Activated naive CD4-positive, alpha-beta T cell treated with anti-CD3 and anti-CD28 coated beads for 36 hours (primary cell): ENCODE measurements at regions of chr22 and their contacts with region 1.

Region 1: GRCh38 chr22:38755911-38756532 is at the start of gene SUN2:
- DNase-seq: peak; percentile 94
- H3K4me3 Mint-ChIP-seq: peak within 1 kb of the TSS; percentile 92
- H3K27ac Mint-ChIP-seq: peak within 1 kb of the TSS; percentile 92
- H3K4me1 Mint-ChIP-seq: peaks cover 52% of the 10 kb centered on the region
- H3K27me3 Mint-ChIP-seq: no peaks in the 10 kb centered on the region
- total RNA-seq, gene SUN2: 120 to 121 TPM

Region 2: GRCh38 chr22:38201710-38202436 is 554.1 kb before region 1 on chr22 and contains the start of gene MAFF:
- CTCF ChIA-PET with region 1: no interaction called
- intact Hi-C with region 1: loop called (anchors 10 kb)
- DNase-seq: peak; percentile 95
- H3K4me3 Mint-ChIP-seq: peak within 1 kb of the TSS; percentile 79
- H3K27ac Mint-ChIP-seq: peak within 1 kb of the TSS; percentile 77
- H3K4me1 Mint-ChIP-seq: peaks cover 28% of the 10 kb centered on the region
- H3K27me3 Mint-ChIP-seq: no peaks in the 10 kb centered on the region
- total RNA-seq, gene MAFF: 2.7 to 2.8 TPM

Region 3: DNA sequence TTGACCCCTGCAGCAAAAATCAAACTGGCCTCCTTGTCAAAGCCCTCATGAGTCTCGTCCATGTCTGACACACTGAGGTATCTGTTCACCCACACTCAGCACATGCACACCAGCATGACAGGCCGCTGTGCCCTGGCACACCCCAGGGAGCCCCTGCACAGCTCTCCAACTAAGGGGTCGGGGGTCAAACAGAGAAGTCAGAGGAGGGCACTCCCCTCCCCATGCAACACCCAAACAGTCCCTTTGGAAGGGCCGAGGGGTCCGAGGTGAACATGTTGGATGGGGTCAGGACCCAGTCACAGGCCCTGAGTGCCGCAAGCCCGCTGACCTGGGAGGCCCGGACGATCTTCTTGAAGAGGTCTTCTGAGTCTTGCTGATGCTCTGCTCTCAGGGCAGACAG is 14.9 kb before region 1 on chr22:
- CTCF ChIA-PET with region 1: no interaction called
- intact Hi-C with region 1: no loop called
- DNase-seq: no peak
- H3K4me3 Mint-ChIP-seq: no peak overlapping the region
- H3K27ac Mint-ChIP-seq: peak overlapping the region; percentile 63
- H3K4me1 Mint-ChIP-seq: peaks cover 22% of the 10 kb centered on the region
- H3K27me3 Mint-ChIP-seq: no peaks in the 10 kb centered on the region

Region 4: DNA sequence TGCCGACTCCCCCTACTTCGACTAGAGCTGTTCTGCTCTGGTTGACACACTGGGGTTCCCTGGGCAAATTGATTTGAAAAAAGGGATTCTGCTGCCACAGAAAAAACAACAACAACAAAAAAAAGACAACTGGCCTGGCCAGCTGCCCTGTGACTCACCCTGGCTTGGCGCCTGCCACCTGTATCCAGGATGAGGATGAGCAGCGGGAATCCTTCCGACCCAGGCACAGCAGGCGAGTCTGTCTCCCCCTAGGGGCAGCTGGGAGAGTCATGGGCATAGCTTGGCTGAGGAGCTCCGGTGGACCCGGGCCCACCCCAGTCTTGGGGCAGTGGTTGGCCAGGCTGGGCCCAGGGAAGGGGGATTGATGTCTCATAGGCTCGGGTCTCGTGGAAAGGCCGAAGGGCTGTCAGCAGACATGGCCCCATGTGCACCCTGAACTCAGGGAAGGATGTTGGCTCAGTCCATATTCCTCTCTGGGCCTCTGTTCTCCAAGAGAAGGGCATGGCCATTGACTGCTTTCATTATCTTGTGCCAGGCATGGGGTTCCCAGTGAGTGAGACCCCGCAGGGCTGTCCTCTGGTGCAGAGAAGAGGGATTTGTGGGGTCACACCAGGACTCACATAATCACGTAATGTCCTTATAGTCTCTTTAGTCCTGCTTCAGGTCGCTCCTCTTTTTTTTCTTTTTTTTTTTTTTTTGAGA is 10.2 kb after region 1 on chr22:
- CTCF ChIA-PET with region 1: interaction called, 23 read pairs
- intact Hi-C with region 1: no loop called
- DNase-seq: peak; percentile 58
- H3K4me3 Mint-ChIP-seq: no peak overlapping the region
- H3K27ac Mint-ChIP-seq: no peak overlapping the region
- H3K4me1 Mint-ChIP-seq: peaks cover 5% of the 10 kb centered on the region
- H3K27me3 Mint-ChIP-seq: no peaks in the 10 kb centered on the region

Region 5: GRCh38 chr22:38843201-38843715 is 87.2 kb after region 1 on chr22:
- CTCF ChIA-PET with region 1: interaction called, 3 read pairs
- intact Hi-C with region 1: loop called (anchors 5 kb)
- DNase-seq: peak; percentile 58
- H3K4me3 Mint-ChIP-seq: peak overlapping the region; percentile 34
- H3K27ac Mint-ChIP-seq: no peak overlapping the region
- H3K4me1 Mint-ChIP-seq: peaks cover 15% of the 10 kb centered on the region
- H3K27me3 Mint-ChIP-seq: peaks cover 16% of the 10 kb centered on the region

Region 6: GRCh38 chr22:39152511-39153219 is 396.6 kb after region 1 on chr22 and contains the start of gene CBX7:
- CTCF ChIA-PET with region 1: no interaction called
- intact Hi-C with region 1: no loop called
- DNase-seq: peak; percentile 94
- H3K4me3 Mint-ChIP-seq: peak within 1 kb of the TSS; percentile 84
- H3K27ac Mint-ChIP-seq: peak within 1 kb of the TSS; percentile 60
- H3K4me1 Mint-ChIP-seq: peaks cover 36% of the 10 kb centered on the region
- H3K27me3 Mint-ChIP-seq: peaks cover 15% of the 10 kb centered on the region
- total RNA-seq, gene CBX7: 20.8 to 24.1 TPM

Region 7: GRCh38 chr22:39319270-39320022 is 563.4 kb after region 1 on chr22 and contains the start of gene RPL3:
- CTCF ChIA-PET with region 1: no interaction called
- intact Hi-C with region 1: loop called (anchors 5 kb)
- DNase-seq: peak; percentile 94
- H3K4me3 Mint-ChIP-seq: peak within 1 kb of the TSS; percentile 99
- H3K27ac Mint-ChIP-seq: peak within 1 kb of the TSS; percentile 100
- H3K4me1 Mint-ChIP-seq: peaks cover 42% of the 10 kb centered on the region
- H3K27me3 Mint-ChIP-seq: no peaks in the 10 kb centered on the region
- total RNA-seq, gene RPL3: 3,434 to 3,511 TPM